ENCODE measurements at regions of chr1 and their contacts with region 1.

Region 1: DNA sequence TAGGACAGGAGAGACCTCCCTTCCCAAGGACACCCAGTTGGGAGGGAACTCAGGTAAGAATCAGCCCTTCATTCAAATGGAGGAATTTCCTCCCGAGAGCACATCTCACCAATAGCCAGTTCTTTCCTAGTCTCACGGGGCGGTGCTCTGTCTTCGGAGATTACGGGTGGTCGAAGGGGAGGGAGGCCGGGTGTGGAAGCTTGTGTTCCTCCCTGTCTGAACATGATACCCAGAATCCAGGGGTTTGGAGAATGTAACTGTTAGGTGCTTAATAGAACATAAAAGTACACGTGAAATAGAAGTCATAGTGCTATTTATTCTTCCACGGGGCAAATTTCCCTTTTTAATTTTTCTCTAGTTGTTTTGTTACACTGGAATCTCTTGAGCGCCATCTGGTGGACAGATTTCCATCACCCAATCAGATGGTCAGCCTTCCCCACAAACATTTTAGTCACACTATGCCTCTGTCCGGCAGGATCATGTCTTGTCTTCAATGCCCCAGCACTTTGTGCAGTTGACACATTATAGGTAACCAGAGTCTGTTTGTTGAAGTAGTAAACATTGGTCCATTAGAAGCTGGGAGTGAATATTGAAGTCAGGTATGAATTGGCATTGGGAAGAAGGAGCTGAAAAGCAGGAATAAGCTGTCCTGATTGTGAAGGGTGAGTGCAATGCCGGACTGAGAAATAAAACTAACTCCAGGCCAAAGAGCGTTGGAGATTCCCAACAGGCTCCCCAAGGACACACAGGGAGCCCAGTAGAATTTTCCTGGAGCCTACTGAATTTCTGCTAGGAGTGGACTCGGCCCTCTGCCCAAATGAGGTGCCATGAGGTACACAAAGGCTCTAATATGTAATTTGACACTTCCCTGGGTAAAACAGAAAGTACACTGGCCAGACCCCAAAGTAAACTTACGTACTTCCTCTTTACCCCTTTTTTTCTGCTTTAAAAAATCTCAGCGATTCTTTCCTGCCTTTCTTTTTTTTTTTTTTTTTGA is 27.6 kb upstream of the ZNF697 start:
- DNase-seq: peak; percentile 78
- H3K4me3 ChIP-seq: peak overlapping the region; percentile 49 to 50
- H3K27ac ChIP-seq: peak overlapping the region; percentile 54 to 97
- H3K4me1 ChIP-seq: peaks cover 3 to 20% of the 10 kb centered on the region in 2 experiments; a peak in 3 of 4 replicates
- H3K27me3 ChIP-seq: no peaks in the 10 kb centered on the region
- CTCF ChIP-seq: peak; percentile 90
- EP300 ChIP-seq: no peak
- RAD21 ChIP-seq: peak; percentile 67

Region 2: DNA sequence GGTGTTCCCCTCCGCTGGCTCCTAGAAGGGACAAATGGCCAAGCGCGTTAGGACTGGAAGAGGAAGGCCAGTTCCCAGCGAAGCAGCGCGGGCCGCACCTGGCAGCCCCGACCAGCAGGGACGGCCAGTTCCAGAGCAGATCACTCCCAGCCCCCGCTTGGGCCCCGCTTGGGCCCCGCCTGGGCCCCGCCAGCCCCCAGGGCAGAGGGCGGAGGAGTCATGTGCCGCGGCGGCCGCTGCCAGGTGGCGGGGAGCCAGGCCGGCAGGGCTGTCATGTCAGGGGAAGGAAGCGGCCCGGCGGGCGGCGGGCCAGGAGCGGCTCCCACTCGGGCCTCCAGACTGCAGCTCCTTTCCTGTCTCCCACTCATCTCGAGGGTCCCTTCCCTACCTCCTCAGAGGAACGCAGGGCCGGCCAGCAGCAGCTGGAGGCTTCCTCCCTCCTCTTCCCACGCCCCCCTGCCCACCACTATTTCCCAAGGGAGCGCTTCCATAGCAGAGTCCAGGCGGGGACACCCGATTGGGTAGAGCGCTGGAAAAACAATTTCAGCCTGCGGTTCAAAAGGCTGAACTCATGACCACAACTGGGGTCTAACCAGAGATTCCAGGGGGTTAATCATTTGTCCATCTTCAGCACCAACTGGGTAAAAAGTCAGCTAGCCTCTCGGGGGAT is 44.1 kb before region 1 on chr1:
- CTCF ChIA-PET with region 1: interaction called, 45 read pairs
- POLR2A ChIA-PET with region 1: no interaction called
- DNase-seq: peak; percentile 96
- H3K4me3 ChIP-seq: peak overlapping the region in 1 of 2 experiments; percentile 24; a peak in 2 of 4 replicates
- H3K27ac ChIP-seq: peak overlapping the region; percentile 58 to 67
- H3K4me1 ChIP-seq: peaks cover 22 to 28% of the 10 kb centered on the region in 2 experiments
- H3K27me3 ChIP-seq: no peaks in the 10 kb centered on the region
- CTCF ChIP-seq: no peak
- EP300 ChIP-seq: peak; percentile 61 to 78
- RAD21 ChIP-seq: peak; percentile 16; the same call in 1 of the 2 replicates

Region 3: GRCh38 chr1:119647734-119648619 is 27.7 kb before region 1 on chr1 and contains the start of gene ZNF697:
- CTCF ChIA-PET with region 1: interaction called, 53 read pairs
- POLR2A ChIA-PET with region 1: interaction called, 3 read pairs
- DNase-seq: peak; percentile 96
- H3K4me3 ChIP-seq: peak within 1 kb of the TSS; percentile 97 to 98
- H3K27ac ChIP-seq: peak within 1 kb of the TSS; percentile 96
- H3K4me1 ChIP-seq: peaks cover 5 to 11% of the 10 kb centered on the region in 2 experiments; a peak in 3 of 4 replicates
- H3K27me3 ChIP-seq: no peaks in the 10 kb centered on the region
- CTCF ChIP-seq: peak; percentile 41; the same call in 1 of the 2 replicates
- EP300 ChIP-seq: no peak
- RAD21 ChIP-seq: peak; percentile 68; the same call in 1 of the 2 replicates
- polyA plus RNA-seq, gene ZNF697: 3.4 and 4.1 TPM in 2 replicates

Region 4: DNA sequence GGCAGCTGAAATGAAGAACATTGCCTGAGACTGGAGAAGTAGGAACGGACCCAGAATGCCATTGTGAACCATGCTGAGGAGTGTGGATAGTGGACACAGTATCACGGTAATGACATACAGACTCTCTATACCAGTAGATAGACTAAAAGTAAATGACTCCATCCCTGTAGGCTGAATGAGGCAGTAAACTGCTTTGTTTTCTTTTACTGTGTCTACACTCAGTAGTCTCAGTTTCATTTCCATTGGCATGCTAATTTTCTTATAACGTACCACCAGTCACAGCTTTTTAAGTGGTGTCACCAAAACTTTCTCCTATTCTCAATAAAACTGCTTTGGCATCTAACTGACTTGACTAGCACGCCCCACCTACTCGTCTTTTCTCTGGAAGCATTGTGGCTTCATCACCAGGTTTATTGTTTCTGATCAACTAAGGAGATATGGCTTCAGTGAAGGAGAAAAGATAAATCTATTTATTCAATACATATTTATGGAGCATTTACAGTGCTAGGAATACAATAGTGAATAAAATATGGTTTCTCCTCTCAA is 19.2 kb before region 1 on chr1:
- CTCF ChIA-PET with region 1: interaction called, 63 read pairs
- POLR2A ChIA-PET with region 1: no interaction called
- DNase-seq: no peak
- H3K4me3 ChIP-seq: no peak overlapping the region
- H3K27ac ChIP-seq: no peak overlapping the region
- H3K4me1 ChIP-seq: no peaks in the 10 kb centered on the region
- H3K27me3 ChIP-seq: no peaks in the 10 kb centered on the region
- CTCF ChIP-seq: no peak
- EP300 ChIP-seq: no peak
- RAD21 ChIP-seq: no peak

Region 5: GRCh38 chr1:119662034-119662437 is 13.6 kb before region 1 on chr1:
- CTCF ChIA-PET with region 1: interaction called, 63 read pairs
- POLR2A ChIA-PET with region 1: no interaction called
- DNase-seq: no peak
- H3K4me3 ChIP-seq: no peak overlapping the region
- H3K27ac ChIP-seq: no peak overlapping the region
- H3K4me1 ChIP-seq: no peaks in the 10 kb centered on the region
- H3K27me3 ChIP-seq: no peaks in the 10 kb centered on the region
- CTCF ChIP-seq: no peak
- EP300 ChIP-seq: no peak
- RAD21 ChIP-seq: no peak

Region 6: GRCh38 chr1:119686649-119687048 is 11.0 kb after region 1 on chr1:
- CTCF ChIA-PET with region 1: interaction called, 22 read pairs
- POLR2A ChIA-PET with region 1: no interaction called
- DNase-seq: no peak
- H3K4me3 ChIP-seq: no peak overlapping the region
- H3K27ac ChIP-seq: no peak overlapping the region
- H3K4me1 ChIP-seq: no peaks in the 10 kb centered on the region
- H3K27me3 ChIP-seq: no peaks in the 10 kb centered on the region; the same call in 1 of the 2 replicates
- CTCF ChIP-seq: no peak
- EP300 ChIP-seq: no peak
- RAD21 ChIP-seq: no peak

Region 7: GRCh38 chr1:119702384-119702783 is 26.7 kb after region 1 on chr1:
- CTCF ChIA-PET with region 1: interaction called, 22 read pairs
- POLR2A ChIA-PET with region 1: no interaction called
- DNase-seq: no peak
- H3K4me3 ChIP-seq: no peak overlapping the region
- H3K27ac ChIP-seq: no peak overlapping the region
- H3K4me1 ChIP-seq: peaks cover 0 to 3% of the 10 kb centered on the region in 2 experiments; a peak in 1 of 4 replicates
- H3K27me3 ChIP-seq: no peaks in the 10 kb centered on the region; the same call in 1 of the 2 replicates
- CTCF ChIP-seq: no peak
- EP300 ChIP-seq: no peak
- RAD21 ChIP-seq: no peak